PC-9 (cell line): ENCODE measurements at regions of chr7 and their contacts with region 1.

Region 1: GRCh38 chr7:10618933-10619332 is 354.7 kb upstream of the PHF14 start:
- DNase-seq: no peak
- H3K4me3 ChIP-seq: no peak overlapping the region
- H3K27ac ChIP-seq: no peak overlapping the region
- H3K4me1 ChIP-seq: no peaks in the 10 kb centered on the region
- H3K27me3 ChIP-seq: no peaks in the 10 kb centered on the region
- CTCF ChIP-seq: no peak

Region 2: DNA sequence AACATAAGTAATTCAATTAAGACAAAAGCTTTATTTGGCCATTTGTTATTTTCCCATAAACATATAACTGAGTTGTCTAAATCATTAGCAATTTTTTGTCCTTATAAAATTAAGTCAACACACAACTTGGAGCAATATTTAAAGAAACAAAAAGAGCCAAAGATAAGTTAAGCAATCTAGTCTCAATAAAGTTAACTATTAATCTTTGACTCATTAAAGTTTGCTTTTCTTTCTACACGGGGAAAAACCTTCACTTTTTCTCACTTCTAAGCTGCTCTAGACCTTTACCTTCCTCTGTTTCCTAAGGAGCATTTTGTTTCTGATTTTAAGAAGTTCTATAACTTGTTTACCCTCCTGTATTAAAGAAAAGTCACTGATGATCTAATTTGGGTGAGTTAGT is 512.3 kb before region 1 on chr7:
- CTCF ChIA-PET with region 1: no interaction called
- POLR2A ChIA-PET with region 1: no interaction called
- intact Hi-C with region 1: no loop called
- DNase-seq: no peak
- H3K4me3 ChIP-seq: no peak overlapping the region
- H3K27ac ChIP-seq: no peak overlapping the region
- H3K4me1 ChIP-seq: no peaks in the 10 kb centered on the region
- H3K27me3 ChIP-seq: no peaks in the 10 kb centered on the region
- CTCF ChIP-seq: no peak

Region 3: DNA sequence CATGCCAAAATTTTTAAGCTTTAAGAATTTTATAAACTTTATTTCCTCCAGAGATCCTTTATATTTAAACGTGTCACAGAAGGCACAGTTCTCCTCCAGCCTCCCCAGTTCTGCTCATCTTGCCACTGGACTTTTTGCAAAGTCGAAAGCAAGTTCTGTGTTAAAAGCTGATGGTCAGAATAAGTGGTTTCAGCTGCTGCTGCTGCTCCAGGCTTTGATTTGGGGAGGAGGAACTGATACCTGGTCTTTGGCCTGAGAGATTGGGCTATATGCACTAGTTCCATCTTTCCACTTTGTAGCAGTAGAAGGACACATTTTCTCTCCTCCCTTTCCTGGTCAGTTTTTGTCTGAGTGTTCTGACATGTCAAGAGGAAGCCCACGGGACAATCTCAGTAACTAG is 81.2 kb before region 1 on chr7:
- CTCF ChIA-PET with region 1: no interaction called
- POLR2A ChIA-PET with region 1: no interaction called
- intact Hi-C with region 1: no loop called
- DNase-seq: no peak
- H3K4me3 ChIP-seq: no peak overlapping the region
- H3K27ac ChIP-seq: no peak overlapping the region
- H3K4me1 ChIP-seq: no peaks in the 10 kb centered on the region
- H3K27me3 ChIP-seq: no peaks in the 10 kb centered on the region
- CTCF ChIP-seq: no peak

Region 4: GRCh38 chr7:10696064-10696463 is 77.1 kb after region 1 on chr7:
- CTCF ChIA-PET with region 1: no interaction called
- POLR2A ChIA-PET with region 1: no interaction called
- intact Hi-C with region 1: loop called (anchors 2 kb)
- DNase-seq: no peak
- H3K4me3 ChIP-seq: no peak overlapping the region
- H3K27ac ChIP-seq: no peak overlapping the region
- H3K4me1 ChIP-seq: no peaks in the 10 kb centered on the region
- H3K27me3 ChIP-seq: peaks cover 8% of the 10 kb centered on the region; the same call in 1 of the 2 replicates
- CTCF ChIP-seq: no peak